CD4-positive, alpha-beta T cell (primary cell): ENCODE measurements at regions of chr1 and their contacts with region 1.

Region 1: DNA sequence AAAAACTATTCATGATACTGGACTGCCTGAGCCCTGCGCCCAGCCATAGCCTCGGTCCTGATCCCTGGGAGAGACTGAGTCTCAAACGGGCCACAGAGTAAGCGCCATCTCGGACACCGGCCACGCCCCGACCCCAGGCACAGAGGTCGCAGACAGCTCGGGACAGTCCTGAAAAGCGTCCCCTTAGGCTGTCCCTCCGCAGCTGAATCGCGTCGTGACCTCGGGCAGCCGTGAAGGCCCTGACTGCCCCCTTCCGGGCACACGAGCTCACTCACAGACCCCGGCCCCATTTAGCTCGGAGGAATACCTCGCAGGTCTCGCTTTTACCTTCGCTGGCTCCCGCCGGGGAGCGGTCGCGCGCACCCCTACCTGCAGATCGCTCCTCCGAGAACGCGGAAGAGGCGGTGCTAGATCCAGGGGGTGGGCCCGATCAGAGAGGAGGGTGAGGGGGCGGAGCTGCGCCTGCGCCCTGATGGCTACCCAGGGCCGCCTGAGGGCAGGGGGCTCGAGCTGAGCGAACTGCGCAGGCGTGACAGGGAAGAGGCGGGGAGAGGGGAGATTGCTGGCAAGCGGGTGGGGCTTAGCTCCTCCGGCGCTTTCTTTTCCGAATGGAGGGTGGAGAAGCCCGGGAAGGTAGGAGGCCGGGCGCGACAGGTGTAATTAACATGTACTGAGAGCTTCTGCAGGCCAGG is at the start of gene MKNK1:
- DNase-seq: peak; percentile 97 to 100 (median 99)
- ATAC-seq: peak; percentile 98
- H3K4me3 ChIP-seq: peak within 1 kb of the TSS; percentile 98
- H3K4me3 Mint-ChIP-seq: peak within 1 kb of the TSS; percentile 93
- H3K27ac ChIP-seq: peak within 1 kb of the TSS; percentile 46 to 63
- H3K27ac Mint-ChIP-seq: peak within 1 kb of the TSS; percentile 86
- H3K4me1 ChIP-seq: peaks cover 49% of the 10 kb centered on the region
- H3K4me1 Mint-ChIP-seq: peaks cover 66% of the 10 kb centered on the region
- H3K27me3 ChIP-seq: no peaks in the 10 kb centered on the region
- H3K27me3 Mint-ChIP-seq: no peaks in the 10 kb centered on the region
- CTCF ChIP-seq: no peak
- total RNA-seq, gene MKNK1: 27.1 to 29.6 TPM

Region 2: GRCh38 chr1:46340404-46341221 is 263.4 kb before region 1 on chr1 and contains the start of gene NSUN4:
- CTCF ChIA-PET with region 1: no interaction called
- POLR2A ChIA-PET with region 1: no interaction called
- intact Hi-C with region 1: loop called in 1 of 2 experiments (anchors 2 kb)
- DNase-seq: peak; percentile 64 to 96 (median 80)
- ATAC-seq: peak; percentile 86
- H3K4me3 ChIP-seq: peak within 1 kb of the TSS; percentile 99
- H3K4me3 Mint-ChIP-seq: peak within 1 kb of the TSS; percentile 99
- H3K27ac ChIP-seq: peak within 1 kb of the TSS; percentile 91 to 99
- H3K27ac Mint-ChIP-seq: peak within 1 kb of the TSS; percentile 97
- H3K4me1 ChIP-seq: peaks cover 27% of the 10 kb centered on the region
- H3K4me1 Mint-ChIP-seq: peaks cover 52% of the 10 kb centered on the region
- H3K27me3 ChIP-seq: no peaks in the 10 kb centered on the region
- H3K27me3 Mint-ChIP-seq: no peaks in the 10 kb centered on the region
- CTCF ChIP-seq: peak; percentile 80
- total RNA-seq, gene NSUN4: 34.9 to 36.7 TPM

Region 3: GRCh38 chr1:46461809-46462448 is 142.1 kb before region 1 on chr1:
- CTCF ChIA-PET with region 1: no interaction called
- POLR2A ChIA-PET with region 1: no interaction called
- intact Hi-C with region 1: no loop called
- DNase-seq: no peak
- ATAC-seq: no peak
- H3K4me3 ChIP-seq: no peak overlapping the region
- H3K4me3 Mint-ChIP-seq: no peak overlapping the region
- H3K27ac ChIP-seq: no peak overlapping the region
- H3K27ac Mint-ChIP-seq: no peak overlapping the region
- H3K4me1 ChIP-seq: peaks cover 7% of the 10 kb centered on the region
- H3K4me1 Mint-ChIP-seq: peaks cover 7% of the 10 kb centered on the region
- H3K27me3 ChIP-seq: peaks cover 15 to 43% of the 10 kb centered on the region in 2 experiments
- H3K27me3 Mint-ChIP-seq: peaks cover 51% of the 10 kb centered on the region
- CTCF ChIP-seq: no peak

Region 4: GRCh38 chr1:46527474-46528296 is 76.3 kb before region 1 on chr1:
- CTCF ChIA-PET with region 1: interaction called, 6 read pairs
- POLR2A ChIA-PET with region 1: interaction called, 3 read pairs
- intact Hi-C with region 1: loop called in 1 of 2 experiments (anchors 10 kb)
- DNase-seq: peak; percentile 47 to 81 (median 64)
- ATAC-seq: peak; percentile 69
- H3K4me3 ChIP-seq: no peak overlapping the region
- H3K4me3 Mint-ChIP-seq: no peak overlapping the region
- H3K27ac ChIP-seq: no peak overlapping the region
- H3K27ac Mint-ChIP-seq: no peak overlapping the region
- H3K4me1 ChIP-seq: peaks cover 5% of the 10 kb centered on the region
- H3K4me1 Mint-ChIP-seq: no peaks in the 10 kb centered on the region
- H3K27me3 ChIP-seq: peaks cover 6 to 13% of the 10 kb centered on the region in 2 experiments
- H3K27me3 Mint-ChIP-seq: peaks cover 58% of the 10 kb centered on the region
- CTCF ChIP-seq: peak; percentile 76

Region 5: GRCh38 chr1:46547481-46548383 is 56.3 kb before region 1 on chr1:
- CTCF ChIA-PET with region 1: no interaction called
- POLR2A ChIA-PET with region 1: no interaction called
- intact Hi-C with region 1: no loop called
- DNase-seq: peak in 3 of 14 experiments; percentile 49 to 56 (median 53)
- ATAC-seq: no peak
- H3K4me3 ChIP-seq: no peak overlapping the region
- H3K4me3 Mint-ChIP-seq: no peak overlapping the region
- H3K27ac ChIP-seq: no peak overlapping the region
- H3K27ac Mint-ChIP-seq: no peak overlapping the region
- H3K4me1 ChIP-seq: peaks cover 27% of the 10 kb centered on the region
- H3K4me1 Mint-ChIP-seq: peaks cover 10% of the 10 kb centered on the region
- H3K27me3 ChIP-seq: peaks cover 38 to 43% of the 10 kb centered on the region in 2 experiments
- H3K27me3 Mint-ChIP-seq: peaks cover 55% of the 10 kb centered on the region
- CTCF ChIP-seq: no peak

Region 6: GRCh38 chr1:46616277-46617107 is 12.5 kb after region 1 on chr1 and contains the start of gene MOB3C:
- CTCF ChIA-PET with region 1: interaction called, 20 read pairs
- POLR2A ChIA-PET with region 1: interaction called, 163 read pairs
- intact Hi-C with region 1: loop called (anchors 1 kb)
- DNase-seq: peak; percentile 39 to 80 (median 61)
- ATAC-seq: peak; percentile 84
- H3K4me3 ChIP-seq: peak within 1 kb of the TSS; percentile 94
- H3K4me3 Mint-ChIP-seq: peak within 1 kb of the TSS; percentile 96
- H3K27ac ChIP-seq: peak within 1 kb of the TSS; percentile 48 to 84
- H3K27ac Mint-ChIP-seq: peak within 1 kb of the TSS; percentile 90
- H3K4me1 ChIP-seq: peaks cover 57% of the 10 kb centered on the region
- H3K4me1 Mint-ChIP-seq: peaks cover 49% of the 10 kb centered on the region
- H3K27me3 ChIP-seq: no peaks in the 10 kb centered on the region
- H3K27me3 Mint-ChIP-seq: no peaks in the 10 kb centered on the region
- CTCF ChIP-seq: no peak
- total RNA-seq, gene MOB3C: 6.7 to 7.8 TPM

Region 7: DNA sequence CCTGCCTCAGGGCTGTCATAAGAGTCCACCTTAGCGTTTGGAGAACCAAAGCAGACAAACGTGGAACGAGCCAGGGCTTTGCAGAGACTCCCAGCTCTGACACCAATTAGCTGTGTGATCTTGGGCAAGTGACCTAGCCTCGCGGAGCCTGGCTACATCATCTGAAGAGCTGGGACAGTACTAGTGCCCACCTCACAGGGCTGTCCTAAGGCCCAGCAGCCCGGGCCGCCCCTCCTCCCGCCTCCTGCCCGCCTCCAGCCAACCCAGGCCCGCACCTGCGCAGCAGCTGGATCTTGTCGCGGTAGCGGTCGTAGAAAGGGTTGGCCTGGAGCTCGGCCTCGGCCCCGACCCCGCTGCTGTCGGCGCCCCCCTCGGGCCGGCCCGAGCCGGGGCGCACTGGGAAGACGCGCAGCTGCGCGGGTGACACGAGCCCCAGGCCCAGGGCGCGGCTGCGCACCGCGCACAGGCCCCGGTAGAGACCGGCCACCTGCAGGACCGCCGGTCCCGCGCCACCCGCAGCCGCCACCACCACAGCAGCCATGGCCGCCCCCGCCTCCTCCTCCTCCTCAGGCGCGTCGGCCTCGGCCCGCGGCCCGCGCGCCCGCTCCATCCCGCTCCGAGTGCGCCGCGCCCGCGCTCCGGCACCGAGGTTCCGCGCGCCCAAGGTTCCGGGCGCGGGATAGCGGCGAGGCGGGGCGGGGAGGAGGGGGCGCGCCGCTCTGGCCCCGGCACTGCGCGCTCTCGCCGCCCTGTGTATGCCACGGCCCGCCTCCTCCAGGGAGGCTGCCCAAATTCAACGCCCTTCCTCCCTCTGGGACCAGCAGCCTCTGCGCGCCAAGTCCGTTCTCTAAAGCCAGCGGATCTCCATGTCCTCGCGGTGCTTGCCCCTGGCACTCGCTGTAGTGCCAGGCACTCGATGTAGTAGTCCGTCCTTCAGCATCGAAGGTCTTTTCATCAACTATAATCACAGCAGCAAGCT is 64.1 kb after region 1 on chr1 and contains the start of gene ATPAF1:
- CTCF ChIA-PET with region 1: interaction called, 7 read pairs
- POLR2A ChIA-PET with region 1: interaction called, 18 read pairs
- intact Hi-C with region 1: loop called in 1 of 2 experiments (anchors 2 kb)
- DNase-seq: peak; percentile 31 to 83 (median 54)
- ATAC-seq: peak; percentile 87
- H3K4me3 ChIP-seq: peak within 1 kb of the TSS; percentile 81
- H3K4me3 Mint-ChIP-seq: peak within 1 kb of the TSS; percentile 87
- H3K27ac ChIP-seq: peak within 1 kb of the TSS; percentile 7 to 68
- H3K27ac Mint-ChIP-seq: peak within 1 kb of the TSS; percentile 69
- H3K4me1 ChIP-seq: peaks cover 22% of the 10 kb centered on the region
- H3K4me1 Mint-ChIP-seq: peaks cover 16% of the 10 kb centered on the region
- H3K27me3 ChIP-seq: no peaks in the 10 kb centered on the region
- H3K27me3 Mint-ChIP-seq: no peaks in the 10 kb centered on the region
- CTCF ChIP-seq: no peak
- total RNA-seq, gene ATPAF1: 10.1 to 12.4 TPM

Region 8: GRCh38 chr1:47333922-47334764 is 730.1 kb after region 1 on chr1:
- CTCF ChIA-PET with region 1: no interaction called
- POLR2A ChIA-PET with region 1: no interaction called
- intact Hi-C with region 1: loop called in 1 of 2 experiments (anchors 10 kb)
- DNase-seq: peak; percentile 44 to 89 (median 59)
- ATAC-seq: peak; percentile 88
- H3K4me3 ChIP-seq: peak overlapping the region; percentile 82
- H3K4me3 Mint-ChIP-seq: peak overlapping the region; percentile 96
- H3K27ac ChIP-seq: peak overlapping the region; percentile 80 to 84
- H3K27ac Mint-ChIP-seq: peak overlapping the region; percentile 90
- H3K4me1 ChIP-seq: peaks cover 34% of the 10 kb centered on the region
- H3K4me1 Mint-ChIP-seq: peaks cover 21% of the 10 kb centered on the region
- H3K27me3 ChIP-seq: no peaks in the 10 kb centered on the region
- H3K27me3 Mint-ChIP-seq: no peaks in the 10 kb centered on the region
- CTCF ChIP-seq: no peak